ENCODE measurements at regions of chr5 and their contacts with region 1.

Region 1: GRCh38 chr5:31809050-31809870 is 170.3 kb downstream of the PDZD2 start:
- DNase-seq: peak; percentile 77
- ATAC-seq: peak; percentile 97
- H3K4me3 Mint-ChIP-seq: no peak overlapping the region
- H3K27ac Mint-ChIP-seq: 0 out of 2 replicates have a peak overlapping the region, but pooled peaks have one; percentile 24
- H3K4me1 Mint-ChIP-seq: peaks cover 6% of the 10 kb centered on the region
- H3K27me3 Mint-ChIP-seq: no peaks in the 10 kb centered on the region
- CTCF ChIP-seq: peak; percentile 38; the same call in 1 of the 2 replicates

Region 2: DNA sequence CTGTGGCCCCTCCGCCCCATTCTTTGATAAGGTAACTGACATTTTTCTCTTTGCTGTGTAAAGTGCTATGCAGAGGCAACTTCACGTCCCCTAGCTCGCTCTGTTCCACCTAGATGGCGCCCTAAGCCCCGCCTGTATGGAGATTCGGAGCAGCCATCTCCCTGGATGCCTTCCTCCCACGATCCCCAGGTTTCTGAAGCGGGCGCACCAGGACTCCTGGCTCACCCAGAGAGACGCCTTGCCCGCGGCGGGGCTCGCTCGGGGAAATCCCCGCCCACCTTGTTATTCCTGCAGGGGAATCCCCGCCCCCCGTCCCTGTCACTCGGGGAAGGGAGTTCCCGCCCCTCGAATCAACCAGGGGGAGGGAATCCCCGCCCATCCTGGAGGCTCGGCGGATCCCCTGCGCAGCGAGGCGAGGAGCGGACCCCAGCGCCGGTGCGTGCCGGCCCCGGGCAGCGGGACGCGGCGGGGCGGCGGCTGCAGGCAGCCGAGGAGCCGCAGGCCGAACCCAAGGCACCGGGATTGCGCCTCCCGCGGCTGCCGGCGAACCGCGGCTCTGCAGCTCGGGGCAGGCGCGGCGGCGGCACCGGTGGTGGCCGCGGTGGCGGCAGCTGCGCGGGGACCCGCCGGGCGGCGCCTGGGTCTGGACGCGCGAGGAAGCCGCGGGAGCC is 170.4 kb before region 1 on chr5 and contains the start of gene PDZD2:
- CTCF ChIA-PET with region 1: interaction called, 36 read pairs
- POLR2A ChIA-PET with region 1: no interaction called
- DNase-seq: peak; percentile 88
- ATAC-seq: peak; percentile 74
- H3K4me3 Mint-ChIP-seq: peak within 1 kb of the TSS; percentile 82
- H3K27ac Mint-ChIP-seq: peak within 1 kb of the TSS; percentile 47; the same call in 1 of the 2 replicates
- H3K4me1 Mint-ChIP-seq: peaks cover 33% of the 10 kb centered on the region
- H3K27me3 Mint-ChIP-seq: no peaks in the 10 kb centered on the region
- CTCF ChIP-seq: no peak
- total RNA-seq, gene PDZD2: 7.1 to 11.4 TPM (median 7.5 TPM) in 3 replicates

Region 3: DNA sequence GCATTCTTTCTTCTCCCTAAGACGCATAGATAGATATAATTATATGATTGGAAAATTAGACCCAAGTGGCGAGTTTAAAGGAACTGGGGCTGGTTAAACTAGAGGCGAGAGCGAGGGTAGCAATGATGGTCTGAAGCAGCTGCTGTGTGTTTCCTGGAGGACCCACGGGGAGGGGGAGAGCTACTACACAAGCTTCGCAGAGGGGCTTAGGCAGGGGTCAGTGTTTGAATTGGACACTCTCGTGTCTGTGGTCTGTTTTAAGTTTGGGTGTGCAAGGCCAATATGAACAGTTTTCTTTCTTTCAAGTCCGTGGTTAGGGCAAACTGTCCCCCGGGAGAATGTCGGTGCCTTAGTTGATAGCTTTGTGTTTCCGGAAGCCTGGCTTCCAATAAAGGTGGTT is 127.2 kb before region 1 on chr5:
- CTCF ChIA-PET with region 1: interaction called, 10 read pairs
- POLR2A ChIA-PET with region 1: no interaction called
- DNase-seq: no peak
- ATAC-seq: peak; percentile 46; the same call in 1 of the 2 replicates
- H3K4me3 Mint-ChIP-seq: no peak overlapping the region
- H3K27ac Mint-ChIP-seq: no peak overlapping the region
- H3K4me1 Mint-ChIP-seq: peaks cover 30% of the 10 kb centered on the region
- H3K27me3 Mint-ChIP-seq: no peaks in the 10 kb centered on the region
- CTCF ChIP-seq: no peak

Region 4: DNA sequence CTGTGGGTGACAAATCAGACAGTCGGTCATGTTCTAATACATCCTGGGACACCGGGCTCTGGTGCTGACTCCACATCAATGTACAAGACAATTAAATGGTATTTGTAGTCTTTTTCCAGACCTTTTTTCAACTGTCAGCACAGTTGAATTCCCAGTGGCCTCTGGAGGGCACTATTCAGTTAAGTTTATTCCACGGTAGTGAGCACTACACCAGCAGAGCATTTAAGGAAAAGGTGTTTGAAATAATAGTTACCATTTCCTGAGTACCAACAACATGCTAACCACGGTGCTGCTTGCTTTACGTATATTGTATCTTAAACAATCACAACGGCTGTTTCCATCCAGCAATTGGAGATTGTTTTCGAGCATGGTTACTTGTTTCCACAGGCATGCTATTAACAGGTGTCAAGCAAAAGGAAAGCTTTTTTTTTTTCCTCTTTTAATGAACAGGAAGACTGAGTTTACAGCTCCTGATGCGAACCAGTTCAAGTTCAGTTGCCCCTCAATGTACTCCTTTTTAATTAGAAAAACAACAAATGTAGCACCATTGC is 16.3 kb after region 1 on chr5:
- CTCF ChIA-PET with region 1: interaction called, 12 read pairs
- POLR2A ChIA-PET with region 1: no interaction called
- DNase-seq: peak; percentile 52
- ATAC-seq: peak; percentile 95
- H3K4me3 Mint-ChIP-seq: no peak overlapping the region
- H3K27ac Mint-ChIP-seq: no peak overlapping the region
- H3K4me1 Mint-ChIP-seq: 0 out of 2 replicates have a peak, but pooled peaks cover 4% of the 10 kb centered on the region
- H3K27me3 Mint-ChIP-seq: no peaks in the 10 kb centered on the region
- CTCF ChIP-seq: peak; percentile 23; the same call in 1 of the 2 replicates

Region 5: DNA sequence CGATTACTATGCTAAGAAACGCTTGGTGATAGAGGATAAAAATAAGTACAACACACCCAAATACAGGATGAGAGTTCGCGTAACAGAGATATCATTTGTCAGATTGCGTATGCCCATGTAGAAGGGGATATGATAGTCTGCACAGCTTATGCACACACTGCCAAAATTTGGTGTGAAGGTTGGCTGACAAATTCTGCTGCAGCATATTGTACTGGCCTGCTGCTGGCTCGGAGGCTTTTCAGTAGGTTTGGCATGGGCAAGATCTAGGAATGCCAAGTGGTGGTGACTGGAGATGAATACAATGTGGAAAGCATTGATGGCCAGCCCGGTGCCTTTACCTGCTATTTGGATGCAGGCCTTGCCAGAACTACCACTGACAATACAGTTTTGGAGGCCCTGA is 38.1 kb after region 1 on chr5:
- CTCF ChIA-PET with region 1: no interaction called
- POLR2A ChIA-PET with region 1: no interaction called
- DNase-seq: no peak
- ATAC-seq: no peak
- H3K4me3 Mint-ChIP-seq: no peak overlapping the region
- H3K27ac Mint-ChIP-seq: no peak overlapping the region
- H3K4me1 Mint-ChIP-seq: peaks cover 8% of the 10 kb centered on the region
- H3K27me3 Mint-ChIP-seq: no peaks in the 10 kb centered on the region
- CTCF ChIP-seq: no peak

Region 6: DNA sequence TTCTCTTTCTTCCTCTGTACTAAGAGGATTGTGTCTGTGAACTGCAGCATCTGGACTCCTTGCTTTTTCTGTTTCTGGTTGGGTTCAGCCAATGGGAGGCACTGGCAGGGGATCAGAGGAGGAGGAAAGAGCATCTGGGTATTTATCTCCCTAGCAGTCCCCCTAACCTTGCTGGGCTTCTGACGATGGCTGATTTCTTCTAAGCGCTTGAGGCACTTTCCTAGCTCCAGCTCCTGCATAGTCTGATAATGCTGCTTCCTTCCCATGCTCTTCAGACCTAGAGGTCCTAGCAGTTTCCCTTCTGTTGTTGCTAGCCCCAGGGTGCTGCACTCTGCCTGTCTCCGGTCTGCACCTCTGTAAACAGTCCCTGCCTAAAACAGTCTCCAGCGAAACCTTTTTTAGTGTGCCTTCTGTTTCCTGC is 54.7 kb after region 1 on chr5:
- CTCF ChIA-PET with region 1: no interaction called
- POLR2A ChIA-PET with region 1: no interaction called
- DNase-seq: no peak
- ATAC-seq: peak; percentile 87
- H3K4me3 Mint-ChIP-seq: no peak overlapping the region
- H3K27ac Mint-ChIP-seq: peak overlapping the region; percentile 86; the same call in 1 of the 2 replicates
- H3K4me1 Mint-ChIP-seq: peaks cover 34% of the 10 kb centered on the region
- H3K27me3 Mint-ChIP-seq: peaks cover 4% of the 10 kb centered on the region; the same call in 1 of the 2 replicates
- CTCF ChIP-seq: no peak

Region 7: DNA sequence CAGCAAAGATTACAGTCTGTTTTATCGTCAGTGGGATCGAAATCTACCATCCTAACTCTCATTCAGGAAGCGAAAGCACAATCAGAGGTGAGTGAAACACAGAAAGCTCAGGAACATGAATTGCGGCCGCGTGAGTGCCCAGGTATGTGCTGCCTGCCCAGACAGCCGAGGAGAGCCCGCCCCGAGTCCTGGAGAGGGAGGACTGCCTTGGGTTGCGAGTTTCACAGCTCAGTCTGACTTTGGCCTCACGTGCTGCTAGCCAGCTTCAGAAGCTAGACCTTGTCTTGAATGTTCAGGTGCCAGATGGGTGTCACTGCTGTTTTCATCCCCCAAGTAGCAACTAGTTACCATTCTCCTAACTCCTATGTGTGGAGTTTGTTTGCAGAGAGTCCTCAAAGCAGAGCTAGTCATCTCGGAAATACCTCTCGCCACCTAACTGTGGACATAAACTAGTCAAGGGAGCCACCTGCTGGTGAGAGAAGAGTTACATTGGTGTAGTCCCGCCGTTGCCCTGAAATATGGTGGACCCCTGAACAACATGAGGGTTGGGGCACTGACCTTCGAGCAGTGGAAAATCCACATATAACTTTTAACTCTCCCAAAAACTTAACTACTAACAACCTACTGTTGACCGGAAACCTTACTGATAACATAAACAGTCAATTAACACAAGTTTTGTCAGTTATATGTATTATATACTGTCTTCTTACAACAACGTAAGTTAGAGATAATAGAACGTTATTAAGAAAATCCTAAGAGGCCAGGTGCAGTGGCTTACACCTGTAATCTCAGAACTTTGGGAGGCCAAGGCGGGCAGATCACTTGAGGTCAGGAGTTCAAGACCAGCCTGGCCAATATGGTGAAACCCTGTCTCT is 283.9 kb after region 1 on chr5:
- CTCF ChIA-PET with region 1: interaction called, 27 read pairs
- POLR2A ChIA-PET with region 1: no interaction called
- DNase-seq: peak; percentile 77
- ATAC-seq: peak; percentile 94
- H3K4me3 Mint-ChIP-seq: no peak overlapping the region
- H3K27ac Mint-ChIP-seq: 0 out of 2 replicates have a peak overlapping the region, but pooled peaks have one; percentile 41
- H3K4me1 Mint-ChIP-seq: peaks cover 5% of the 10 kb centered on the region
- H3K27me3 Mint-ChIP-seq: no peaks in the 10 kb centered on the region
- CTCF ChIP-seq: peak; percentile 58

Measured in WTC11 (cell line).